Activated T-helper 1 cell treated with anti-CD3 and anti-CD28 coated beads, Interleukin-12 subunit alpha, Interleukin-12 subunit beta, Interleukin-2, Interleukin-4 antibody, amounts not matched to agents 30 ng/mL and 10 ng/mL and 1 ng/mL, durations not matched to agents 14 hours and 24 hours and 36 hours (primary cell): ENCODE measurements at regions of chr6 and their contacts with region 1.

Region 1: GRCh38 chr6:40436685-40437604 is 150.2 kb downstream of the LRFN2 start:
- DNase-seq: peak; percentile 49
- H3K4me3 Mint-ChIP-seq: peak overlapping the region; percentile 35
- H3K27ac Mint-ChIP-seq: peak overlapping the region; percentile 60
- H3K4me1 Mint-ChIP-seq: peaks cover 27% of the 10 kb centered on the region
- H3K27me3 Mint-ChIP-seq: peaks cover 8% of the 10 kb centered on the region

Region 2: DNA sequence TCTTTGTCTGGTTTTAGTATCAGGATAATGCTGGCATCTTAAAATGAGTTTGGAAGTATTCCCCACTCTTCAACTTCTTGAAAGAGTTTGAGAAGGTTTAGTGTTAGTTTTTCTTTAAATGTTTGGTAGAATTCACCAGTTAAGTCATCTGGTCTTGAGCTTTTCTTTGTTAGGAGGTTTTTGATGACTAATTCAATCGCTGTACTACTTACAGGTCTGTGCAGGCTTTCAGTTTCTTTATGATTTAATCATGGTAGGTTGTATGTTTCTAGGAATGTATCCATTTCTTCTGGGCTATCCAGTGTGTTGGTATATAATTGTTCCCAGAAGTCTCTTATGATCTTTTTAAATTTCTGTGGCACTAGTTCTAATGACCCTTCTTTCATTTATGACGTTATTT is 65.3 kb before region 1 on chr6:
- intact Hi-C with region 1: loop called (anchors 1 kb)
- DNase-seq: no peak
- H3K4me3 Mint-ChIP-seq: peak overlapping the region; percentile 71
- H3K27ac Mint-ChIP-seq: peak overlapping the region; percentile 93
- H3K4me1 Mint-ChIP-seq: peaks cover 64% of the 10 kb centered on the region
- H3K27me3 Mint-ChIP-seq: no peaks in the 10 kb centered on the region